ENCODE measurements at regions of chr9 and their contacts with region 1.

Region 1: DNA sequence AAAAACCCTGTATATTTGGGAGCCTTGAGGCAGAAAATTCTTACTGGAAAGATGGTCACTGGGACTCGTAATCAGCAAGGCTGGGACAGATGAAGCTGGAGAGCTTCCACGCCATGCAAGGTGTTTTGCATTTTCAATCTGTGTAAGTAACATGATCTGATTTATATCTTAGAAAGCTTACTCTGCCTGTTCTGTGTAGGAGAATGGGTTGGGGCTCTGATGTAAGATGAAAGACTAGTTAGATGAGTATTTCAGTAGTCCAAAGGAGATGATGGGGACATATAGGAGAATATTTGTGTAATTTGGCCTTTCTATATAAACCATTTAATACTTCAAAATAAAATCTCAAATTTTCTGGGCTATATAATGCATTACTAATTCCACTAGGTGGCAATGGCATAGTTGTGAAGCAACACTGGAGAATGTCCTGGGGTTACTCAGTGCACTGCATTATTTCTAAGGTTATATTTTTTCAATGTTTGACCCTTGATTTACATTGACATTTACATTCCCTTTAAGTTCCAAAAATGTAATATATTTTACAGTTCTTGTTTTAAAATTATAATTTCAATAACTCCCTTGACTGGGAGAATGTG is 21.9 kb upstream of the FSD1L start:
- DNase-seq: no peak
- ATAC-seq: peak; percentile 60

Region 2: DNA sequence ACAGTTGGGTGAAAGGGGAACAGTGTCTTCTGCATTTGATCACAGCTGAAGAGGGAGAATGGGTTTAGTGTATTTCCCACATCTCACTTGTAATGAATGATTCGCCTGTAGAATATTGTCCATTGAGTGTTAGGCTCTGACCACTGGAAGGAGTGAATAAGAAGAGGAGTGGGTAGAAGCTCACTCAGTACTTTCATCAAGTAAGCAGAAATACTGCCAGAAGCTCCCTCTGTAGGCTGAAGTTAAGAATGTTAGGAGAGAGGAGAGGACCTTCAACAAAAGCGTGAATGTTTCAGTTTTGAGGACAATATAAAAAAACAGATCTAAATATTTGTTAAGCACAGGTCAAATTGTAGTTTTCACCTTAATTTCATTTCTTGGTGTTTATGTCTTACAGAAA is 49.4 kb after region 1 on chr9:
- intact Hi-C with region 1: loop called (anchors 10 kb)
- DNase-seq: no peak
- ATAC-seq: peak; percentile 43

Measured in left ventricle myocardium superior (tissue), 1 donor.